Activated CD4-positive, alpha-beta memory T cell treated with anti-CD3 and anti-CD28 coated beads for 36 hours (primary cell): ENCODE measurements at regions of chr10 and their contacts with region 1.

Region 1: GRCh38 chr10:109883859-109884771 is 39.2 kb downstream of the XPNPEP1 start:
- DNase-seq: peak; percentile 70
- H3K4me3 Mint-ChIP-seq: no peak overlapping the region
- H3K27ac Mint-ChIP-seq: no peak overlapping the region
- H3K4me1 Mint-ChIP-seq: peaks cover 21% of the 10 kb centered on the region
- H3K27me3 Mint-ChIP-seq: no peaks in the 10 kb centered on the region

Region 2: GRCh38 chr10:109838592-109839244 is 45.4 kb before region 1 on chr10:
- CTCF ChIA-PET with region 1: no interaction called
- POLR2A ChIA-PET with region 1: no interaction called
- intact Hi-C with region 1: no loop called
- DNase-seq: no peak
- H3K4me3 Mint-ChIP-seq: no peak overlapping the region
- H3K27ac Mint-ChIP-seq: no peak overlapping the region
- H3K4me1 Mint-ChIP-seq: no peaks in the 10 kb centered on the region
- H3K27me3 Mint-ChIP-seq: peaks cover 4% of the 10 kb centered on the region

Region 3: DNA sequence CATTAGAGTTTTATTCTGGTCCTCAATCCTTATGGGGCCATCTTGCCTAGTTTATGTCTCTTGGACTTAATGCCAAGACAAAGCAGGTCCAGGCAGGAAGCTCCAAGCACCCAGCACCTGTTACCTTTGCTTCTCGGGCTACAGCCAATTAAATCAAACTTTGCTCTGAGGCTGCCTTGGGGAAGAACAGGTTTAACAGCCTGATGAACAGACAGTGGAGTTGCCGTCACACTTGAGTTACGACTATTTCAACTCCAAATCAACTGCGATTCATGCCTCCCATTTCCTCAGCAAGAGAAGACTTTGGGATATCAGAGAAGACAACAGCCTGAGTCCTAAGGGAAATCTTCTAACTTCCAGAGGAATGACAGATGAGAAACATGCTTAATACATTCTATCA is 23.0 kb before region 1 on chr10:
- CTCF ChIA-PET with region 1: no interaction called
- POLR2A ChIA-PET with region 1: no interaction called
- intact Hi-C with region 1: no loop called
- DNase-seq: no peak
- H3K4me3 Mint-ChIP-seq: no peak overlapping the region
- H3K27ac Mint-ChIP-seq: no peak overlapping the region
- H3K4me1 Mint-ChIP-seq: no peaks in the 10 kb centered on the region
- H3K27me3 Mint-ChIP-seq: no peaks in the 10 kb centered on the region

Region 4: GRCh38 chr10:109902934-109903589 is 18.9 kb after region 1 on chr10:
- CTCF ChIA-PET with region 1: interaction called, 13 read pairs
- POLR2A ChIA-PET with region 1: no interaction called
- intact Hi-C with region 1: no loop called
- DNase-seq: peak; percentile 34
- H3K4me3 Mint-ChIP-seq: peak overlapping the region; percentile 59
- H3K27ac Mint-ChIP-seq: peak overlapping the region; percentile 86
- H3K4me1 Mint-ChIP-seq: peaks cover 63% of the 10 kb centered on the region
- H3K27me3 Mint-ChIP-seq: no peaks in the 10 kb centered on the region

Region 5: GRCh38 chr10:109922976-109923921 is 39.1 kb after region 1 on chr10 and contains the start of gene XPNPEP1:
- CTCF ChIA-PET with region 1: interaction called, 8 read pairs
- POLR2A ChIA-PET with region 1: no interaction called
- intact Hi-C with region 1: loop called (anchors 1 kb)
- DNase-seq: peak; percentile 90
- H3K4me3 Mint-ChIP-seq: peak within 1 kb of the TSS; percentile 90
- H3K27ac Mint-ChIP-seq: peak within 1 kb of the TSS; percentile 93
- H3K4me1 Mint-ChIP-seq: peaks cover 56% of the 10 kb centered on the region
- H3K27me3 Mint-ChIP-seq: no peaks in the 10 kb centered on the region
- total RNA-seq, gene XPNPEP1: 66.4 to 66.6 TPM

Region 6: GRCh38 chr10:109956454-109957091 is 72.5 kb after region 1 on chr10:
- CTCF ChIA-PET with region 1: interaction called, 13 read pairs
- POLR2A ChIA-PET with region 1: no interaction called
- intact Hi-C with region 1: no loop called
- DNase-seq: peak; percentile 46
- H3K4me3 Mint-ChIP-seq: no peak overlapping the region
- H3K27ac Mint-ChIP-seq: no peak overlapping the region
- H3K4me1 Mint-ChIP-seq: peaks cover 2% of the 10 kb centered on the region
- H3K27me3 Mint-ChIP-seq: no peaks in the 10 kb centered on the region

Region 7: GRCh38 chr10:110016039-110016438 is 131.9 kb after region 1 on chr10:
- CTCF ChIA-PET with region 1: interaction called, 12 read pairs
- POLR2A ChIA-PET with region 1: no interaction called
- intact Hi-C with region 1: no loop called
- DNase-seq: no peak
- H3K4me3 Mint-ChIP-seq: no peak overlapping the region
- H3K27ac Mint-ChIP-seq: peak overlapping the region; percentile 62
- H3K4me1 Mint-ChIP-seq: peaks cover 79% of the 10 kb centered on the region
- H3K27me3 Mint-ChIP-seq: no peaks in the 10 kb centered on the region

Region 8: DNA sequence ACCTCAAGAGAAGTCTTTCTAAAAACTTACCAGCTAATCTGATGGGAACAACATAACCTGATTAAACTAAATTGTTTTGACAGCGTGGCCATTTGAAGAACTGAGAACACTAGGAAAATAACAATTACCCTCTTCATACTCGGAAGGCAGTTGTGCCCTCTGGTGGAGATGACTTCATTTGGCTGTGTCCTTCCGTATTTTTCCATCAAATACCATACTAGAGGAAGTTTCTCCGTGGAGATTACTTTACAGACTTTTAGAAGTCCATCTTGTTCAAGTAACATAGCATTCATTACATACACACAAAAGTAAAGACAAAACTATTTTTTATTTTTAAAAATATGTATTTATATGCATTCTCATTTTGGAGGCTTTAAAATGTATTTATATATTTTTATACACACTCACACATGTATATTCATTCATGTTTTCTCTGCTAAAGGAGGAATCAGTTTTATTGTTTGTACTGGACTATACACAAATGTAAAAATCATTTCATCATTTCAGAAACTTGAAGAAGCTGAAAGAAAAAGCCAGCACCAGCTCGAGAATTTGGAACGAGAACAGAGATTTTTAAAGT is 395.4 kb after region 1 on chr10:
- CTCF ChIA-PET with region 1: interaction called, 12 read pairs
- POLR2A ChIA-PET with region 1: no interaction called
- intact Hi-C with region 1: loop called (anchors 10 kb)
- DNase-seq: peak; percentile 54
- H3K4me3 Mint-ChIP-seq: no peak overlapping the region
- H3K27ac Mint-ChIP-seq: no peak overlapping the region
- H3K4me1 Mint-ChIP-seq: peaks cover 19% of the 10 kb centered on the region
- H3K27me3 Mint-ChIP-seq: no peaks in the 10 kb centered on the region